A673 (cell line): ENCODE measurements at regions of chr2 and their contacts with region 1.

Region 1: DNA sequence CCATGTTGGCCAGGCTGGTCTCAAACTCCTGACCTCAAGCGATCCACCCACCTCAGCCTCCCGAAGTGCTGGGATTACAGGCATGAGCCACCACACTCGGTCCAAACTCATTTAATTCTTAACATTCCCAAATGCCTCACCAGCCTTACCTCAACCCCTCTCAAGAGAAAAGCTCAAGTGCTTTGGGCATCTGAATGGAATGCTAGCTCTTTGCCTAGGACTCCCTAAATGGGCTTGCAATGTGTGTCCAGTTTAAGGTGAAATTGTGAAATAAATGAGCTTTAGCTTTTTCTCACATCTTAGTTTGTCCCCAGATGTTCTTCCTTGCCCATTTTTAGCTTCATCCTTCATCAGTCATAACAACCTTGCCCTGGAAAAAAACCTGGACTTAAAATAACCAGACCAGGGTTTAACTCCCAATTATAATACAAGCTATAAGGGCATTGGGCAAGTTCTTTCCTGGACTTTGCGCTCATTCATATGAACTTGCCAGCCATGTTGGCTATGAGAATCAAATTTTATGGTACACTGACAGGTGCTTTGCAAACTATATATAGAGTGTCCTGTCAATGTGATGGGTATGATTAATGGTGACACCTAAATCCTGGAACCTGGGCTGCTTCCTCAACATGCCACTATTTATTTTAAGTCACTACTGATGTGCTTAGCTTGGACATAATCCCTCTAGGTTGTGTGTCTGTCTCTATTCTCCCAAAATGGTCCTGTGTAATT is 95.1 kb upstream of the SERPINE2 start:
- DNase-seq: no peak
- H3K4me3 ChIP-seq: no peak overlapping the region
- H3K27ac ChIP-seq: peak overlapping the region; percentile 63
- H3K4me1 ChIP-seq: peaks cover 67% of the 10 kb centered on the region
- H3K27me3 ChIP-seq: no peaks in the 10 kb centered on the region
- CTCF ChIP-seq: no peak

Region 2: GRCh38 chr2:223744573-223744972 is 389.6 kb before region 1 on chr2:
- CTCF ChIA-PET with region 1: no interaction called
- POLR2A ChIA-PET with region 1: no interaction called
- intact Hi-C with region 1: loop called (anchors 5 kb)
- DNase-seq: no peak
- H3K4me3 ChIP-seq: no peak overlapping the region
- H3K27ac ChIP-seq: peak overlapping the region; percentile 96
- H3K4me1 ChIP-seq: peaks cover 48% of the 10 kb centered on the region
- H3K27me3 ChIP-seq: no peaks in the 10 kb centered on the region
- CTCF ChIP-seq: no peak

Region 3: DNA sequence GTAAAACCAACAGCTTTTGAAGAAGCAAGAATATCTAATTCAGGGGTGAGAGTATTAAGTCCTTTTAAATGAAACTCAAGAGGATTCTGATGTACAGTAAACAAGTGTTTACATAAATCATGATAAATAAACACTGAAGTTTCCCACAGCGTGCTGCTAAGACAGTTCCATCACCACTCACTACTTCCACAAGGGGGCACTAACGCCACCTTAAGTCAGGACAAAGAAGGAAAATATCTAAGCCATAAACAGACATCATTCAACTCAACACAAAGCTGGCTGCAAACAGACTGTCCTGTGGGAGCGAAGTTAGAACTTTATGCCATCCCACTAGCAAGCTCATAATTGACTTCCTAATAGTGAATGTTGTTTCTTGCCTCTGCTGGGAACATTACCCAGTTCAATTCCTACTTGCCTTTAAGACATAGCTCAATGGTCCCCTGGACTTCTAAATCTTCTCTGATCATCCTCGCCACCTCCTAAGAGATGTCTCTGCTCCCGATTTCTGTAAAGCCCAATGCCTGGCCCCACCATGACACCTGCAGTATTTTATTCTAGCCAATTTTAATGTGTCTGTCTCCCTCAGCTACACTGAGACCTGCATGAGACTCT is 140.4 kb before region 1 on chr2:
- CTCF ChIA-PET with region 1: interaction called, 10 read pairs
- POLR2A ChIA-PET with region 1: no interaction called
- intact Hi-C with region 1: loop called (anchors 1 kb)
- DNase-seq: peak; percentile 92
- H3K4me3 ChIP-seq: no peak overlapping the region
- H3K27ac ChIP-seq: peak overlapping the region; percentile 54
- H3K4me1 ChIP-seq: peaks cover 21% of the 10 kb centered on the region
- H3K27me3 ChIP-seq: no peaks in the 10 kb centered on the region
- CTCF ChIP-seq: peak; percentile 91

Region 4: DNA sequence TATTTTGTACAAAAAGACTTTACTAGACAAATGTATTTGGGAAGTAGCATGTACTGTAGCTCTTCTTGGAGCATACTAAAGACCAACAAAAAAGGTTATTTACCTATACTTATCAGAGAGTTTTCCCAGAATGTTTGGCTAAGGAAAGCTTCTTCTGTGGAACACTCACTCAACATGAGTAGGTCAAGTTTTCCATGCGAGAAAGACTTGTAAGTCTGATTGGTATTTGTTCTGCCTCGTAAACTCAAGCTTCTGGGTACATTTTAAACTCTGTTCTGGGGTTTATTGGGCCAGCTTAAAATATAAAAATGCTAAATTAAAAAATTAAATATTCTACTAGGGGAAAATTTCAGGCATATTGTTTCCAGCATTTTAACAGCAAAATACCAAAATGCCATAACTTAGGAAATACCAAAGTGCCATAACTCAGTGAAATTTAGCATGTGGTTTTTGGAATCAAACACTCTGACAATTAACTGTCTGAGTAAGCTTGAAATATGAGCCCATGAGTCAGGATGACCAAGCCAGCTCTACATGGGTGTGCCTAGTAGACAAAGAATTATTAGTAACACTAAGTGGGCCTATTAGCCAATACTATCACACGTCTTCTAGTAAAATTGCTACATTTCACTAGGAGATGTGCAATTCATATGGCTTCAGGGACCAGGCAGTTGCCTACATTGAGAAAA is 47.8 kb before region 1 on chr2:
- CTCF ChIA-PET with region 1: no interaction called
- POLR2A ChIA-PET with region 1: no interaction called
- intact Hi-C with region 1: loop called (anchors 1 kb)
- DNase-seq: peak; percentile 83
- H3K4me3 ChIP-seq: no peak overlapping the region
- H3K27ac ChIP-seq: peak overlapping the region; percentile 51
- H3K4me1 ChIP-seq: peaks cover 29% of the 10 kb centered on the region
- H3K27me3 ChIP-seq: no peaks in the 10 kb centered on the region
- CTCF ChIP-seq: no peak

Region 5: DNA sequence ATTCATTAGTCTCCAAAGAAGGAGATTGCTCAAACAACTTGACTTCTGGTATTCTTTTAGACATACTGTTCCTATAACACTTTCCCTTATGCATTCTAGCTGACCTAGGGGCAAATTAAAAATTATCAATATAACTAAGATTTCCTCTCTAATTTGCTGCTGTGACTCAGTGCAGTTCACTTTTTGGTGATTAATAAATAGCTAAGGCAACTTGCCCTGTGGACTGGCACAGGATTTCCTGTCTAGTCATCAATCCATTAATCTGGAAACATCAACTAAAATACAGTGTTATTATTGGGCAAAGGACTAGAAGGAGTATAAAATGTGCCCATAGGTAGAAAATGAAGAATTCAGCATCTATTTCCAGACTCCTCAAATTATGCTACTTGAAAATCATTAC is 11.6 kb before region 1 on chr2:
- CTCF ChIA-PET with region 1: no interaction called
- POLR2A ChIA-PET with region 1: no interaction called
- intact Hi-C with region 1: no loop called
- DNase-seq: peak; percentile 42
- H3K4me3 ChIP-seq: no peak overlapping the region
- H3K27ac ChIP-seq: no peak overlapping the region
- H3K4me1 ChIP-seq: peaks cover 5% of the 10 kb centered on the region
- H3K27me3 ChIP-seq: no peaks in the 10 kb centered on the region
- CTCF ChIP-seq: no peak

Region 6: DNA sequence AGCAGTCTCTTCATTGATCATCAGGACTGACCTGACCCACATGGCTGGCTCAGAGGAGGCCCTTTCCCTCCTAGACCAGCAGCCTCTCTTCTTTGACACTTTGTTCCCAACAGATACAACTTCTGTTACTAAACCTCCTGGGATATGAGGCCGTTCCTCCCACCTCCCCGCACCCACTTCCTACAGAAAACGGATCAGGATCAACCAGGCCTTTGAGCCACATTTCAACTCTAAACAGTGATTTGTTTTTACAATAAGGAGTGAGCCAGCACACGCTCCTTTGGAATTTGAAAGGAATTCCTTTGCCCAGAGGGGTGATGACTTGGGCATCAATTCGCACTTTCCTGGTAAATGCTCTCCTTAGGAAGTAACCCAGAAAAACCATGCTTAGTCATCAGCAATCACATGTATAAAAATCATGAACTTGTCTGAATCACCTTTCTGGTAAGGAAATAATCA is 87.3 kb after region 1 on chr2:
- CTCF ChIA-PET with region 1: no interaction called
- POLR2A ChIA-PET with region 1: no interaction called
- intact Hi-C with region 1: loop called (anchors 2 kb)
- DNase-seq: peak; percentile 22
- H3K4me3 ChIP-seq: no peak overlapping the region
- H3K27ac ChIP-seq: no peak overlapping the region
- H3K4me1 ChIP-seq: peaks cover 35% of the 10 kb centered on the region
- H3K27me3 ChIP-seq: no peaks in the 10 kb centered on the region
- CTCF ChIP-seq: no peak